Activated CD8-positive, alpha-beta memory T cell treated with anti-CD3 and anti-CD28 coated beads, Interleukin-2, amount 10 ng/mL, durations not matched to agents 7 days and 5 days (primary cell): ENCODE measurements at regions of chr22 and their contacts with region 1.

Region 1: GRCh38 chr22:31313366-31314147 is 21.3 kb upstream of the PIK3IP1 start:
- DNase-seq: peak; percentile 69
- ATAC-seq: peak; percentile 69
- H3K4me3 Mint-ChIP-seq: no peak overlapping the region
- H3K27ac Mint-ChIP-seq: no peak overlapping the region
- H3K4me1 Mint-ChIP-seq: peaks cover 6% of the 10 kb centered on the region
- H3K27me3 Mint-ChIP-seq: no peaks in the 10 kb centered on the region

Region 2: DNA sequence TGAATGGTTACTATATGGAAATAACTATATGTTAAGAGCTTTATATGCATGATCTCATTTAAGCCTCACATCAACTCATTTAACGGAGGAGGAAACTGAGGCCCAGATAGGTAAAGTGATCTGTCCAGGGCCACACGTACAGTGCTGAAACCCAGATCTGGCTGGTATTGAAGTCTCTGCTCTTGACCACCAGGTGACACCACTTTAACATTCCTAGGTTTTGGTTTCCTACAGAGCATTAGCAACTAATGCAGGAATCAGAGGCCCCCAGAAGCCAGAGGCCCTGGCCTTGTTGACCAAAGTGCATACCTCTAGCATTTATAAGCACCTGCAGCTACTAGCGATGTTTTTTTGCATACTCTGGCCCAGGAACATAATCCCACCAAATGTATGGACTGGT is 114.4 kb before region 1 on chr22:
- CTCF ChIA-PET with region 1: no interaction called
- DNase-seq: no peak
- ATAC-seq: no peak
- H3K4me3 Mint-ChIP-seq: no peak overlapping the region
- H3K27ac Mint-ChIP-seq: no peak overlapping the region
- H3K4me1 Mint-ChIP-seq: no peaks in the 10 kb centered on the region
- H3K27me3 Mint-ChIP-seq: no peaks in the 10 kb centered on the region

Region 3: DNA sequence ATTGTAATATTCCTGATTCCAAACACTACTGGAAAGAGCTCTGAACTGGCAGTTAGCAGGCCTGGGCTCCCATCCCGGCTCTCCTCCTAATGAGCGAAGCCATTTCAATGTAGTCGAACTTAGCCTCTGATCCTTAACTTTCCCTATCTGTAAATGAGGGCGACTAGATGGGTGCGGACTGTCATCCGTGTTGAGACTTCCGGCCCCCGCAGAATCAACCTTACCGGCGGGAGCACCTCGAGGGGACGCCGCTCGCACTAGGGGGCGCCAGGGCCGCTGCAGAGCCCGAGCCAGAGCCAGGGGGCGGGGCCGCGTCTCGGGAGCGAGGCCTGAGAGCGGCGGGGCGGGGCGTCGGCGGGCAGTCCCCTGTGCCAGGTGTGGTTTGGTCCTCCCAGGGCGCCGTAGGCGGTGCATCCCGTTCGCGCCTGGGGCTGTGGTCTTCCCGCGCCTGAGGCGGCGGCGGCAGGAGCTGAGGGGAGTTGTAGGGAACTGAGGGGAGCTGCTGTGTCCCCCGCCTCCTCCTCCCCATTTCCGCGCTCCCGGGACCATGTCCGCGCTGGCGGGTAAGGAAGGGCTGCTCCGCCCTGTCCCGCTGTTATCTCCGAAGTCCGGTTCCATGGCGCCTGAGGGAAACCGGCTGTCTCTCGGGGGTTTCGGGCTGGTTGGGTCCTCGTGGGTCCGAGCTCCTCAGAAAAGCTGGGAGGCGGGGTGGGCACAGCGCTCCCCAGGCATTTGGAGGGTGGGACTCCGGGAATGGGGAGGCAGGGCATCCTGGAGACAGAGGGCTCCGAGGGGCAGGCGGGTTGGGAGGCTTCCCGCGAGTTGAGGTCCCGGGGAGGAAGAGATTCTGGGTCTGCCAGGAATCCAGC is 101.5 kb before region 1 on chr22 and contains the start of gene LIMK2:
- CTCF ChIA-PET with region 1: interaction called, 36 read pairs
- DNase-seq: peak; percentile 98
- ATAC-seq: peak; percentile 98
- H3K4me3 Mint-ChIP-seq: peak within 1 kb of the TSS; percentile 81
- H3K27ac Mint-ChIP-seq: peak within 1 kb of the TSS; percentile 88
- H3K4me1 Mint-ChIP-seq: peaks cover 36% of the 10 kb centered on the region
- H3K27me3 Mint-ChIP-seq: no peaks in the 10 kb centered on the region
- total RNA-seq, gene LIMK2: 32.2 to 47.3 TPM

Region 4: DNA sequence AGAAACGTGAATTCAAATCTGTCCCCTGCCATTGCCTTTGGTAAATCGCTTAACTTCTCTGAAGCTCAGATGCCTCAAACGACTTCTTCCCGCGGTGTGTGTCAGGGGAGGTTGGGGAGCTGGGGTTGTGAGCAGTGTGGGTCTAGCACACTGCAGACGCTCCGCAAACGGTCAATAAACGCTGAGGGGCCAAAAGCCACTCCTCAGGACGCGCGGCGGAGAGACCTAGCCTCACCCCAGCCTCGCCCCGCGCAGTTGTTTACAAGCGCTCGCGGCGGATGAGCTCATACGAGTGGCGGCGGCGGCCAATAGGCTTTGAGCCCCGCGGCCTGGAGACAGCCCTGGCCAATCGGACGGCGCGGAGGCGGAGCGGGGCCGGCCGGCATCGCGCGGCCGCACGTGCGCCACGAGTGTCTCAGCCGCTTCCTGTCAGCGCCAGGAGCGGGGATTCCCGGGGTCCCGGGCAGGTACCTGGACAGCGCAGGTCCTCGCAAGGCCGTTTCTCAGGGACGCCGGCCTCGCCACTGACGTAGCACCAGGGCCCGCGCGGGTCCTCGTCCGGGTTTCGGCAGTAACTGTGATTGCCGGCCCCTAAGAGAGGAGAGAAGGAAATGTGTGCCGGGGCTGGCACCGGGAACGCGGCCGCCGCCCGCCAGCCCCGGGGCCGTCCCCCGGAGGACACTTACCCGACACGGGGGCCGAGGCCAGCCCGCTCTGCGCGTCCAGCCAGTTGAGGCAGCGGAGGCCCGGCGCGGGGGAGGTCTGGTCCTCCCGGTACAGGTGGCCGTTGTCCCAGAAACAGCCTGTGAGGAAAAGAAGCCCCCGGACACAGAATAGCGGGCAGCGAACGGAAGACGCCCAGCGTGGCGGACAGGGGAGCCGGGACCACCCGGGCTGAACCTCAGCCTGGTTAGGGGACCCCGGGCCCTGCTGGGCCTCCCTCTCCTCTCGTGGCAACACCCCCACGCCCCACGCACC is 22.8 kb before region 1 on chr22:
- CTCF ChIA-PET with region 1: interaction called, 25 read pairs
- DNase-seq: peak; percentile 97
- ATAC-seq: peak; percentile 89
- H3K4me3 Mint-ChIP-seq: peak overlapping the region; percentile 97
- H3K27ac Mint-ChIP-seq: peak overlapping the region; percentile 99
- H3K4me1 Mint-ChIP-seq: peaks cover 75% of the 10 kb centered on the region
- H3K27me3 Mint-ChIP-seq: no peaks in the 10 kb centered on the region

Region 5: GRCh38 chr22:31302006-31302405 is 11.6 kb before region 1 on chr22:
- CTCF ChIA-PET with region 1: interaction called, 29 read pairs
- DNase-seq: no peak
- ATAC-seq: no peak
- H3K4me3 Mint-ChIP-seq: no peak overlapping the region
- H3K27ac Mint-ChIP-seq: no peak overlapping the region
- H3K4me1 Mint-ChIP-seq: peaks cover 7% of the 10 kb centered on the region
- H3K27me3 Mint-ChIP-seq: no peaks in the 10 kb centered on the region